ENCODE measurements at regions of chr22 and their contacts with region 1.

Region 1: DNA sequence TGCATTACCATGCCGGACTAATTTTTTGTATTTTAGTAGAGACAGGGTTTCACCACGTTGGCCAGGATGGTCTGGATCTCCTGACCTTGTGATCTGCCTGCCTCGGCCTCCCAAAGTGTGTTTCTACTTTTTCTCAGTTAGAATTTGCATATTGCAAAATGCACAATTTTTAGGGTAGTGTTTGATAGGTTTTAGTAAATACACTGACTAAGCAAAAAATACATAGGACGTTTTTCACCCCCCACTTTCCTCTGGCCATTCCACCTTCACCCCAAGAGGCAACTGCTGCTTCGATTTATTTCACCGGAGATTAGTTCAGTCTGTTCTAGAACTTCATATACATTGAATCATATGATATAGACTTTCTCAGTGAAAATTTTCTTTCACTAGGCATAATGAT is 1269.1 kb downstream of the TBC1D22A start:
- DNase-seq: no peak
- ATAC-seq: no peak

Region 2: GRCh38 chr22:47954115-47954514 is 77.5 kb before region 1 on chr22:
- intact Hi-C with region 1: no loop called
- DNase-seq: no peak
- ATAC-seq: no peak

Region 3: GRCh38 chr22:47987885-47988515 is 43.6 kb before region 1 on chr22:
- intact Hi-C with region 1: loop called in 1 of 2 experiments (anchors 5 kb)
- DNase-seq: no peak
- ATAC-seq: no peak

Region 4: DNA sequence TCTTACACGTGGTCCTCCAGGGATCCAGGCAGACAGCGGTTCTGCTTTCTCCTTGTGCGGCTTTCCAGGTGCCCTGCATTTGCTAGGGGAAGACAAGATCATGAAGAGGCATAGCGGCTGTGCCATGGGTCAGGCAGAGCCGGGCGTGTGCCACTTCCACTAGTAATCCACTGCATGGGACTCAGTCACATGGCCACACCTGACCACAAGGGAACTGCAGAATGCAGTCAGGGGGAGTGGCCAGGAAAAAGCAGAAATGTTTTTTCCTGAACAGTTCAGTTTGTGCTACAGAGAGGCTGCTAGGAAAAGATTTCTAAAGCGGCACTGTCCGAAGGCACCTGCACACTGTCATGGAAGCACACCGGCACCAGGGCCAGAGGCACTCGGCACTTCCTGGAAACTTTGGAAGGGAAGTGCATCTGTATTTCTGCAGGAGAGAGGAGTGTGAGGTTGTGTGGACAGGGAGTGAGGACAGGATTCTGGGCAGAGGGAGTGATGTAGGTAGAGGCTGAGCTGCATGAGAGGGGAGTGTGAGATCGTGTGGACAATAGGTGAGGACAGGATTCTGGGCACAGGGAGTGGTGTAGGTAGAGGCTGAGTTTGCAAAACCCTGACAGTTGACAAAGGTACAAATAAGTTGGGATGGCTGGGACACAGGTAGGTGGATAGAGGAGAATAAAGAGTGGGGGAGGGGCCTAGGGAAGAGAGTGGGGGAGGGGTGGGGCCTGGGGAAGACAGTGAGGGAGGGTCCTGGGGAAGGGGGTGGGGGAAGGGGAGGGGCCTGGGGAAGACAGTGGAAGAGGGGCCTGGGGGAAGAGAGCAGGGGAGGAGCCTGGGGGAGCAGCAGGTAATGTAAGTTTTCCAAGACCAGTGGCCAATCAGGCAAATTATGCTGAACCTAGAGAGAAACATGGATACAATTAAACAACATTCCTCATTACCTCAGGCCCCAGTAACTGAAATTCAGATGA is 167.2 kb after region 1 on chr22:
- intact Hi-C with region 1: no loop called
- DNase-seq: no peak
- ATAC-seq: peak; percentile 42

Region 5: DNA sequence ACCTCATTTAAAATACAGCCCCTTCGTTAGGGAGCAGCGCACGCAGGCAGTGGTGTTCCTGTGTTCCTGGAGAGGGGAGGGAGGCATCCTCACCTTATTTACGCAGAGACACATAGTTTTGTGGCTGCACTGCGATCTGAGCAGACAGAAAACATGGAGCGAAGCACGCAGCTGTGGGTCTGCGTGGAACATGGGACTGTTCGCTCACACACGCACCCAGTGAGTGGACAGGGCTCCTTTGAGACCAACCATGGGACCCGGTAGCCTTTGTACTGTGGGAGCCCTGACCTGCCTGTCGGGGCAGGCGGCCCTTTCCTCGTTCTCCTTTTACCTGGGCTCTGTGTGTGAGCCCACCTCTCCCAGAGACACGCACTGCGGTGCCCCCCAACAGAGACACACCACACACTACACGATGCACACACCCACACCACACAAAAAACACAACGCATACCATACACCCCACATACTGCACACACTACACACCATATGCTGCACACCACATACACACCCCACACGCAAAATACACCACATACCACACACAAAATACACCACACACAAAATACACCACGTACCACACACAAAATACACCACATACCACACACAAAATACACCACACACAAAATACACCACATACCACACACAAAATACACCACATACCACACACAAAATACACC is 550.3 kb after region 1 on chr22:
- intact Hi-C with region 1: no loop called
- DNase-seq: no peak
- ATAC-seq: no peak